Left ventricle myocardium inferior (tissue), 1 donor: ENCODE measurements at regions of chr21 and their contacts with region 1.

Region 1: DNA sequence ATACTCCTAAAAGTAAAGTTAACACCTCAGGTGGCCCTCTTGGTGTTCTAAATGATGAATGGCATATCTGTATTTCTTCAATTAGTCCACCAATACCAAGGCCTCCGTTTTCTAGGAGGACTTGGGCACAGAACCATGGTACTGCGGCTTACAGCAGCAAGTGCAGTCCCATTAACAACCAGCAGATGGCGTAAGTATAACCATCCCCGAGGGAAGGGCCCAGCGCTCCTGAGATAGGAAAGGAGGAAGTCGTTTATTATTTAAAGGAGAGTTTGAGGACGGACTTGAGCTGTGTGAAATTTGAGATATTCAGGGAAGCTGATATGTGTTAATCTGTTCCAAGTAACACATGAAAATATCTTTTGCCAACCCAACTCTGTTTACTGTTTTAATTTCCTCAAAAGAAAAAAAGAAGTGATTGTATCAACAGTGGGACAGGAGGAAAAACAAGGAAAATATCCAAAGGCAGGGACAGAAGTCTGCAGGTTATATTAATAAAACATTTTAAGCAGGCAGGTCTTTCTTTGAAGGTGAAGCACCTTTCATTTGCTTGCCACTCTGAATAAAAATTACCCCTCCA is 37.7 kb upstream of the KCNJ15 start:
- DNase-seq: peak; percentile 46
- H3K4me3 ChIP-seq: no peak overlapping the region
- H3K27ac ChIP-seq: no peak overlapping the region
- H3K4me1 ChIP-seq: peaks cover 3% of the 10 kb centered on the region
- H3K27me3 ChIP-seq: peaks cover 4% of the 10 kb centered on the region
- CTCF ChIP-seq: peak; percentile 98

Region 2: GRCh38 chr21:38165466-38166172 is 53.5 kb before region 1 on chr21:
- intact Hi-C with region 1: loop called (anchors 10 kb)
- DNase-seq: no peak
- H3K4me3 ChIP-seq: no peak overlapping the region
- H3K27ac ChIP-seq: no peak overlapping the region
- H3K4me1 ChIP-seq: peaks cover 13% of the 10 kb centered on the region
- H3K27me3 ChIP-seq: peaks cover 8% of the 10 kb centered on the region
- CTCF ChIP-seq: no peak

Region 3: GRCh38 chr21:38355992-38356797 is 137.1 kb after region 1 on chr21:
- intact Hi-C with region 1: loop called (anchors 2 kb)
- DNase-seq: peak; percentile 76
- H3K4me3 ChIP-seq: no peak overlapping the region
- H3K27ac ChIP-seq: no peak overlapping the region
- H3K4me1 ChIP-seq: peaks cover 11% of the 10 kb centered on the region
- H3K27me3 ChIP-seq: peaks cover 23% of the 10 kb centered on the region
- CTCF ChIP-seq: peak; percentile 96

Region 4: GRCh38 chr21:39079617-39080016 is 860.5 kb after region 1 on chr21:
- intact Hi-C with region 1: no loop called
- DNase-seq: peak; percentile 70
- H3K4me3 ChIP-seq: no peak overlapping the region
- H3K27ac ChIP-seq: no peak overlapping the region
- H3K4me1 ChIP-seq: peaks cover 9% of the 10 kb centered on the region
- H3K27me3 ChIP-seq: no peaks in the 10 kb centered on the region
- CTCF ChIP-seq: no peak